CD4-positive, alpha-beta T cell (primary cell): ENCODE measurements at regions of chr16 and their contacts with region 1.

Region 1: GRCh38 chr16:24036614-24037013 is 200.8 kb downstream of the PRKCB start:
- DNase-seq: peak in 9 of 14 experiments; percentile 5 to 69 (median 28)
- ATAC-seq: peak; percentile 52
- H3K4me3 ChIP-seq: no peak overlapping the region
- H3K4me3 Mint-ChIP-seq: peak overlapping the region; percentile 31
- H3K27ac ChIP-seq: no peak overlapping the region
- H3K27ac Mint-ChIP-seq: peak overlapping the region; percentile 40
- H3K4me1 ChIP-seq: peaks cover 38% of the 10 kb centered on the region
- H3K4me1 Mint-ChIP-seq: peaks cover 43% of the 10 kb centered on the region
- H3K27me3 ChIP-seq: no peaks in the 10 kb centered on the region
- H3K27me3 Mint-ChIP-seq: no peaks in the 10 kb centered on the region
- CTCF ChIP-seq: peak; percentile 72

Region 2: GRCh38 chr16:23678430-23679273 is 358.0 kb before region 1 on chr16 and contains the start of gene PLK1:
- CTCF ChIA-PET with region 1: no interaction called
- POLR2A ChIA-PET with region 1: no interaction called
- intact Hi-C with region 1: loop called in 1 of 2 experiments (anchors 10 kb)
- DNase-seq: peak; percentile 44 to 83 (median 64)
- ATAC-seq: peak; percentile 99
- H3K4me3 ChIP-seq: peak within 1 kb of the TSS; percentile 68
- H3K4me3 Mint-ChIP-seq: peak within 1 kb of the TSS; percentile 85
- H3K27ac ChIP-seq: no peak within 1 kb of the TSS
- H3K27ac Mint-ChIP-seq: peak within 1 kb of the TSS; percentile 32
- H3K4me1 ChIP-seq: peaks cover 21% of the 10 kb centered on the region
- H3K4me1 Mint-ChIP-seq: peaks cover 20% of the 10 kb centered on the region
- H3K27me3 ChIP-seq: no peaks in the 10 kb centered on the region
- H3K27me3 Mint-ChIP-seq: no peaks in the 10 kb centered on the region
- CTCF ChIP-seq: no peak
- total RNA-seq, gene PLK1: 0.84 to 0.85 TPM

Region 3: GRCh38 chr16:23734176-23734893 is 302.3 kb before region 1 on chr16:
- CTCF ChIA-PET with region 1: no interaction called
- POLR2A ChIA-PET with region 1: no interaction called
- intact Hi-C with region 1: loop called (anchors 1 to 2 kb)
- DNase-seq: no peak
- ATAC-seq: no peak
- H3K4me3 ChIP-seq: no peak overlapping the region
- H3K4me3 Mint-ChIP-seq: no peak overlapping the region
- H3K27ac ChIP-seq: no peak overlapping the region
- H3K27ac Mint-ChIP-seq: no peak overlapping the region
- H3K4me1 ChIP-seq: peaks cover 3% of the 10 kb centered on the region
- H3K4me1 Mint-ChIP-seq: no peaks in the 10 kb centered on the region
- H3K27me3 ChIP-seq: no peaks in the 10 kb centered on the region
- H3K27me3 Mint-ChIP-seq: peaks cover 22% of the 10 kb centered on the region
- CTCF ChIP-seq: no peak

Region 4: DNA sequence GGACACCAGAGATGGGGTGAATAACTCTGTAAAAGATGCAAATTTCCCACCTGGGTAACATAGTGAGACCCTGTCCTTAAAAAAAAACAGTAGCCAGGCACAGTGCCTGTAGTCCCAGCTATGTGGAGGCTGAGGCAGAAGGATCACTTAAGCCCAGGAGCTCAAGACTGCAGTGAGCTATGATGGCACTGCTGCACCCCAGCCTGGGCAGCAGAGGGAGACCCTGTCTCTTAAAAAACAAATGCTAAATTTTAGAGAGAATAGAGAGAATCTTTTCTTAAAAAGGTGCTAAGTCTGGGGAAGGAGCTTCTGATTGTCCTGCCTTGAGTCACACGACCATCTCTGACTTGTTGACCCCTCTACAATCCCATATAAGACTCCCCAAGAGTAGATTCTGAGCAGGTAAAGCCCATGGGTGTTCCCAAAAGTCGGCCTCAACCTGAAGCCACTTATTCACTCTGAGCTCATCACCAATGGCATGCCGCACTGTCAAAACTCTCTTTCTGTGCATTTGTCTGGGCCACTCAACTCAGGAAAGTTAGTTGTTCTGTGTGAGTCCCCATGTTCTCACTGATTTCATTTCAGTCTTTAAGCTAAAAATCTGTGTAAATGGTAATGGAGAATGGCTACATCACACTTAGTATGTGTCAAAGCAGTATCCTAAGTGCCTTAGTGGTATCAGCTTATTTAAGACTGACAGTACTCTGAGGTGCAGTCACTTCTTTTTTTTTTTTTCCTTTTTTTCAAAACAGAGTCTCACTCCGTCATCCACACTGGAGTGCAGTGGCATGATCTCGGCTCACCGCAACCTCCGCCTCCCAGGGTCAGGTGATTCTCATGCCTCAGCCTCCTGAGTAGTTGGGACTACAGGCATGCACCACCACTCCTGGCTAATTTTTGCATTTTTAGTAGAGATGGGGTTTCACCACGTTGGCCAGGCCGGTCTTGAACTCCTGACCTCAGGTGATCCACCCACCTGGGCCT is 159.2 kb before region 1 on chr16:
- CTCF ChIA-PET with region 1: interaction called, 4 read pairs
- POLR2A ChIA-PET with region 1: no interaction called
- intact Hi-C with region 1: loop called (anchors 1 to 2 kb)
- DNase-seq: peak in 8 of 14 experiments; percentile 9 to 47 (median 22)
- ATAC-seq: peak; percentile 44
- H3K4me3 ChIP-seq: no peak overlapping the region
- H3K4me3 Mint-ChIP-seq: no peak overlapping the region
- H3K27ac ChIP-seq: no peak overlapping the region
- H3K27ac Mint-ChIP-seq: peak overlapping the region; percentile 49
- H3K4me1 ChIP-seq: peaks cover 26% of the 10 kb centered on the region
- H3K4me1 Mint-ChIP-seq: peaks cover 77% of the 10 kb centered on the region
- H3K27me3 ChIP-seq: no peaks in the 10 kb centered on the region
- H3K27me3 Mint-ChIP-seq: no peaks in the 10 kb centered on the region
- CTCF ChIP-seq: peak; percentile 41

Region 5: DNA sequence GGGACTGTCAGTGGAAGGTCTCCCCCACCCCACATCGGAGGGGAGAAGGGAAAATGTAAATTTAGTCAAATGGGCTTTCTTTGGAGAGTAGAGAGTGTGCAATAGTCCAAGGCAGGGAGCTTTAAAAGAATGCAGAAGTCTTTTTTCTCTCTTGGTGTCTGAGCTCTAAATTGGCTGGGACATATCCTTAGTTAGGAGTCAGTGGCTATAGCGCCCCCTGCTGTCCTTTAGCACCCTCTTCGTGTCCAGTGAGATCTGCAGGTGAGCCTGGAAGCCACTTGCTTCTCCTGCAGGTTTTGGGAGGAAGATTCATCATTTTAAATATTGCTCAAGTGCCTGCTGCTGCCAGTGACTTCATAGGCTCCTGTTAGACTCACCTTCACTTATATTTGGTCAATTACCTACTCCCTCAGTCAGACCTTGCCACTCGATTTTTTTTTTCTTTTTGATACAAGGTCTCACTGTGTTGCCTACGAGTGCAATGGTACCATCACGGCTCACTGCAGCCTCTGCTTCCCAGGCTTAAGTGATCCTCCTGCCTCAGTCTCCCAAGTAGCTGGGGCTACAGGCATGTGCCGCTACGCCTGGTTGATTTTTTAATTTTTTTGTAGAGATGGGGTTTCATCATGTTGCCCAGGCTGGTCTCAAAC is 26.0 kb before region 1 on chr16:
- CTCF ChIA-PET with region 1: interaction called, 9 read pairs
- POLR2A ChIA-PET with region 1: interaction called, 3 read pairs
- intact Hi-C with region 1: loop called (anchors 2 kb)
- DNase-seq: peak; percentile 66 to 91 (median 78)
- ATAC-seq: peak; percentile 30
- H3K4me3 ChIP-seq: no peak overlapping the region
- H3K4me3 Mint-ChIP-seq: no peak overlapping the region
- H3K27ac ChIP-seq: no peak overlapping the region
- H3K27ac Mint-ChIP-seq: peak overlapping the region; percentile 67
- H3K4me1 ChIP-seq: peaks cover 43% of the 10 kb centered on the region
- H3K4me1 Mint-ChIP-seq: peaks cover 57% of the 10 kb centered on the region
- H3K27me3 ChIP-seq: no peaks in the 10 kb centered on the region
- H3K27me3 Mint-ChIP-seq: no peaks in the 10 kb centered on the region
- CTCF ChIP-seq: peak; percentile 84

Region 6: DNA sequence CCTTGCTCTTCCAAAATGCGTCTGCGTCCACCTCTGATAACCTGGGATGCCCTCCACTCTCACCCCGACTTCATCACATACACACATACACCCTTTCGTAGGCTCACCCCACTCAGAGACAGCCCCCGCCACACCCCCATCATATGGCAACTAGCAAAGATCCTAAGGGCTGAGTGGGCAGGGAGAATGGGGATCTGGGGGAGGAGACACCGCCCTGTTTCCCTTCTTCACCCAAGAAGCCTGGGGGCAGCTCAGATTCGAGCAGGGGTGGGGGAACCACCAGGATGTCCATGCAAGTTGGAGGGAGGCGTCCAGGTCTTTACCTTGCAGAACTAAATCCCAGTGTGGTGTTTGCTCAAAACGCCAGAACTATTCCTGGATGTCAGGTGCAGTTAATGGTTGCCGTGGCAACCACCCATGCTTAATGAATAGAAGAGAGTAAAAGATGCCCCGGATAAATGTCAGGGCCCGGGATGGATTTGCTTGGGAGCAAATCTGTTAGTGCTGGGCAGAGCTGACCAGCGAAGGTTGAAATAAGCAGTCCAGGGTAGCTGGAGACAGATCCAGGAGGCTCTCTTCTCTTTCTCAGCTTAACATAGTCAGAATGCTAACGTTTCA is 292.3 kb after region 1 on chr16:
- CTCF ChIA-PET with region 1: no interaction called
- POLR2A ChIA-PET with region 1: no interaction called
- intact Hi-C with region 1: no loop called
- DNase-seq: no peak
- ATAC-seq: no peak
- H3K4me3 ChIP-seq: no peak overlapping the region
- H3K4me3 Mint-ChIP-seq: no peak overlapping the region
- H3K27ac ChIP-seq: no peak overlapping the region
- H3K27ac Mint-ChIP-seq: no peak overlapping the region
- H3K4me1 ChIP-seq: no peaks in the 10 kb centered on the region
- H3K4me1 Mint-ChIP-seq: no peaks in the 10 kb centered on the region
- H3K27me3 ChIP-seq: peaks cover 0 to 7% of the 10 kb centered on the region in 2 experiments
- H3K27me3 Mint-ChIP-seq: peaks cover 23% of the 10 kb centered on the region
- CTCF ChIP-seq: no peak